ENCODE measurements at regions of chr1 and their contacts with region 1.

Region 1: DNA sequence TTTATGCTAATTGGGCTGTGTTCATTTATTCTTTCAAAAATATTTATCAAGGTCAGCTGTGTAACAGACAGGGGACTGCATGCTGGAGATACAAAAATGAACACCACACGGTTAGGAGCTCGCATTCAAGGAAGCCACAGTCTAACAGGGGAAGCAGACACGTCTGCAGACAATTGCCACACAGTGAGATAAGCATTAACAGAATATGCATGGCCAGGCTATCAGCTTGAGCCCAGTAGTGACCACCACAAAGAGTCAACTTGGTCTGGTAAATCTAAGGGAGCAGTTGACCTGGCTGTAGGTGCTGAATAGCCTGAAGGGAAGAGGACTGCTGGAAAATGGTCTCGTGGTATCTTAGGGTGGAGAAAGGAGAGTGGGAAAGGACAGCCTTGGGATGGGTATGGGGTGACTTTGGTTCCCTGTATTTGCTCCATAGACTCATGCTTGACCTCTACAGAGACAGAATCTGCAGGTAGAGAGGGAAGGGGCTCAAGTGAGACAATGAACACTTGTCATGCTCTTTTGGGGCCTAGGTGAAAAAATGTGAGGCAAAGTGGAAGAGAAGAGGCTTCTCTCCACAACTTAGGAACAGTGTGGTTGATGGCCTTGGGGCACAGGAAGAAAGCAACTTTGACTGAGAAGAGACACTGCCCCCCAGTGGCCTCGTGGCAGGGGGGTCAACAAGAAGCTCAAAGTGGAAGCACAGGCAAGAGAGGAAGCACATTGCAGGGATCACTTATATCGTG is 7.6 kb upstream of the NPL start:
- DNase-seq: peak; percentile 61 to 77 (median 64)
- H3K4me3 ChIP-seq: no peak overlapping the region
- H3K27ac ChIP-seq: no peak overlapping the region
- H3K4me1 ChIP-seq: peaks cover 0 to 2% (median 0%) of the 10 kb centered on the region in 3 donors
- H3K27me3 ChIP-seq: no peaks in the 10 kb centered on the region
- CTCF ChIP-seq: peak; percentile 75

Region 2: DNA sequence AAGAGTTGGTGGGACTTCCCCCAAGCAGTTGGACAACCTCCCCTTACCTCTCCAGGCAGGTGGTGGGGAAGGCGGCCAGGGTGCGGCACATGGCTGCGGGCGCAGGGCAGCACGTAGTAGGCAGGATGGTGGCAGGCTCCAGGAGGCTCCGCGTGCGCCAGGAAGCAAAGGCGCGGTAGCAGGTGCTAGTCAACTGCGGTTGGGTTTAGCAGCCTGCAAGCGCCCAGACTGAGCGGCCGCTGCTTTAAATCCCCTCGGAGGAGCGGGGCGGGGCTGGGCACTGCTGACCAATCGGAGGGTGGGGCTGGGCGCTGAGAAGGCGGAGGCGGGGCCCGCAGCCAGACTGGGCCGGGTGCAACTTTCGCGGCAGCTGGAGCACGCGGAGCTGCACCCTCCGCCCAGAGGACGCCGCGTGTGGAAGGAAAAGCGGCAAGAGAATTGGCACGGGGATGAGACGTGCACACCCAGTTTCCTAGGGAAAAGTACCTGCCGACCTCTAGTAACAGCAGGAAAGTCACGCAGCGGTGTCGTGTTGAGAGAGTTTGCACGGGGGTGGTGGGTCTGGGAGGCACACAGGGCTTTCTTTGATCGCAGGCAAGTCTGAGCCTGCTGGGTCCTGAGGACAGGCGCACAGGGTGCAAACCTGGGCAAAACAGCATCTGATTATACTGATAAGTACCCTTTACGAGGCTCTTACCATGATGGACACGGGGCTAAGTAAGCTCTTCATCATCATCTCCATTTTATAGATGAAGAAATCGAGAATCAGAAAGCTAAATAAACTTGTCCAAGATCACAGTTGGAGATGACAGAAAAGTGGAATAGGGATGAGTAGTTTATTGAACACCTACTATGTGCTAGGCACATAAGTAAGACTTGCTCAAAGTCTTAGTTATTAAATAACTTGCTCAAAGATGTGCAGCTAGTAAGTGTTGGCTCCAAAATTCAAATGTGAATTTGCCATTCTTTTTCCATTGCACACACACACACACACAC is 177.5 kb before region 1 on chr1 and contains the start of gene RGS16:
- intact Hi-C with region 1: loop called (anchors 5 kb)
- DNase-seq: peak; percentile 91 to 98 (median 92)
- H3K4me3 ChIP-seq: peak within 1 kb of the TSS; percentile 42 to 63 (median 59)
- H3K27ac ChIP-seq: peak within 1 kb of the TSS; percentile 74 to 79
- H3K4me1 ChIP-seq: peaks cover 0 to 24% (median 0%) of the 10 kb centered on the region in 3 donors
- H3K27me3 ChIP-seq: no peaks in the 10 kb centered on the region
- CTCF ChIP-seq: no peak
- total RNA-seq, gene RGS16: 4.2 TPM

Region 3: DNA sequence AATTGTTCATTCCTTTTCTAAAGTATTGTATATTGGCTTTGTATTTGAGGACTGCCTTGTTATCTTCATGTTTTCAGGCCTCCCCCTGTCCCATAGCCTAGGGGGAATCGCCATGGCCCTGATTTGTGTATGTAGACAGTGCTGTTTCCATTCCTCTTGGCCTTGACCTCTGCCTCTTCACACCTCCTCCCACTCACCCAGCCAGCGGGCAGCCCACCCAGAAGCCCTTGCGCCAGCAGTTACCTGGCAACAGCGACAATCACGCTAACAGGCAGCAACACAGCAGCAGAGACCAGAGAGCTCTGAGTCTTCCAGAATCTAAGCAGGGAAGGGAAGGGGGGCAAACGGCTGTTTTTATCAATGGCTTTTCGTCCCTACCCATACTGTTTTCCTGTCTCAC is 42.5 kb before region 1 on chr1:
- intact Hi-C with region 1: no loop called
- DNase-seq: peak in 4 of 5 donors; percentile 88 to 92 (median 91)
- H3K4me3 ChIP-seq: no peak overlapping the region
- H3K27ac ChIP-seq: no peak overlapping the region
- H3K4me1 ChIP-seq: no peaks in the 10 kb centered on the region
- H3K27me3 ChIP-seq: no peaks in the 10 kb centered on the region
- CTCF ChIP-seq: no peak

Measured in kidney (tissue), 22 donors.